Posterior vena cava (tissue), 2 donors: ENCODE measurements at regions of chr12 and their contacts with region 1.

Region 1: DNA sequence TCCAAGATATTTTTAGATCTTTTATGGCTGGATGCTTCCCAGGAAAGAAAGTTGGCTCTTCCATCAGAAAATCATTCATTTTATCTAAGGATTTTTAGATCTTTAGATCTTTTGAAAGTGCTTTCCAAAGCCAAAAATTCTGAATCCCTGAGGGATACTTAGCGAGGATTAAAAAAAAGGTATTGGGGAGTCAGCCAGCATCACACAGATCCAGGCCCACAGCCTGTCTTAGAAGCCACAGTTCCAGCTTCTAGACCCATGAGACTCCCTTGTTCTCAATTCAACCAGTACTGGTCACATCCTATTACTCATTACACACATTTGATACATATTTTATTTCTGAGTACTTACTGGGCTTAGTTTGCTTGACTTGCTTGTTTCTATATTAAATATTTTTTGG is 49.9 kb downstream of the TSPAN8 start:
- DNase-seq: no peak

Region 2: GRCh38 chr12:69388371-69388770 is 1719.6 kb before region 1 on chr12:
- intact Hi-C with region 1: loop called in 1 of 2 experiments (anchors 10 kb)
- DNase-seq: no peak

Region 3: GRCh38 chr12:71157601-71158233 is 49.8 kb after region 1 on chr12 and contains the start of gene TSPAN8:
- intact Hi-C with region 1: loop called in 1 of 2 experiments (anchors 2 kb)
- DNase-seq: no peak
- total RNA-seq, gene TSPAN8: 3.3 to 10.8 TPM